ENCODE measurements at regions of chr2 and their contacts with region 1.

Region 1: DNA sequence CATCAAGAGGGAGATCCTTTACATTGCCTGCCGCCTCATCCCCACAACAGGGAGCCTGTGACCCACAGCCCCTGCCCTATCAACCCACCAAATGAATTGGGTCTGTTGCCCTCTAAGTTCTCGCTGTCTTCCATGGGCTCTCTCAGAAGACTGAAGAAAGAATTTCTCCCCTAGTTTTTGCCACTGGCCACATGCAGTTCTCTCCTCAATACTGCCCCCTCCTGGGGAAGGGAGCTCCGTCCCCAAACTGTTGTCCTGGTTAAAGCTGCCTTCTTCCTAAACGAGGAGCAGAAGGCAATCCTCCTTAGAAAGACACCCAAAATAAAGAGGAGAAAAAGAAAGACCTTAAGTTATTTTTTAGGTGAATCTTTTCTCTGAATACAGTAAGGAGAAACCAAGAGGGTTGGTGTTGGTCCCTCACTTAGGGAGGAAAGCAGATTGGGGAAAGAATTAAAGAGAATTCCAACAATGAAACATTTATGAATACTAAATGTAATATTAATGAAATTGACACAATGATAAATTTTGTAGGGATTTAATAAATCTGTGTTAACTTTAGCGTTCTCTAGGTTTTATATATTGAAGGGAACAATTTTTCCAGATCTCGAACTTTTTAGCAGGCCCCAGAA is 31.1 kb upstream of the SATB2 start:
- DNase-seq: peak; percentile 68
- H3K4me3 Mint-ChIP-seq: no peak overlapping the region
- H3K27ac Mint-ChIP-seq: no peak overlapping the region
- H3K4me1 Mint-ChIP-seq: no peaks in the 10 kb centered on the region
- H3K27me3 Mint-ChIP-seq: peaks cover 18% of the 10 kb centered on the region

Region 2: GRCh38 chr2:198374375-198375082 is 1114.4 kb before region 1 on chr2:
- CTCF ChIA-PET with region 1: no interaction called
- intact Hi-C with region 1: loop called (anchors 1 kb)
- DNase-seq: peak; percentile 68
- H3K4me3 Mint-ChIP-seq: no peak overlapping the region
- H3K27ac Mint-ChIP-seq: no peak overlapping the region
- H3K4me1 Mint-ChIP-seq: peaks cover 6% of the 10 kb centered on the region
- H3K27me3 Mint-ChIP-seq: peaks cover 9% of the 10 kb centered on the region

Region 3: GRCh38 chr2:198657512-198658121 is 831.3 kb before region 1 on chr2:
- CTCF ChIA-PET with region 1: no interaction called
- intact Hi-C with region 1: loop called (anchors 1 kb)
- DNase-seq: peak; percentile 12
- H3K4me3 Mint-ChIP-seq: no peak overlapping the region
- H3K27ac Mint-ChIP-seq: no peak overlapping the region
- H3K4me1 Mint-ChIP-seq: no peaks in the 10 kb centered on the region
- H3K27me3 Mint-ChIP-seq: no peaks in the 10 kb centered on the region

Region 4: DNA sequence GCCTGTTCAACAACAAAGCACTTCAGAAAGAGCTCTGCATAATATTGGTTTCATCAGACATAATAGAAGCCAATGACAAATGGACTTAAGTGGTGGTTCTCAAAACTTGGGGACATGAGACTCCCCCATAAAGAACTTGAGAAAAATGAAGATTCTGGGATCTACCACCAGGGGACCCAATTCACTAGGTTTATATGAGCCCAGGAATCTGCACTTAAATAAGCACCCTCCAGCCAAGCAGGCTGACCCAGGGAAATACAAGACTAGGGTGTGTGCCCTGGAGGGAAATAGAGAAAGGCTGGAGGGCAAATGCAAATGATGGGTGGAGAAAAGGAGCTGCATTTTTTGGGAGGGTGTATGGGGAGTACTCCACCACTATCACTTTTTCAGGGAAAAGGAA is 83.6 kb before region 1 on chr2:
- CTCF ChIA-PET with region 1: interaction called, 3 read pairs
- intact Hi-C with region 1: loop called (anchors 1 kb)
- DNase-seq: no peak
- H3K4me3 Mint-ChIP-seq: no peak overlapping the region
- H3K27ac Mint-ChIP-seq: no peak overlapping the region
- H3K4me1 Mint-ChIP-seq: no peaks in the 10 kb centered on the region
- H3K27me3 Mint-ChIP-seq: peaks cover 14% of the 10 kb centered on the region

Region 5: GRCh38 chr2:199477277-199477834 is 11.5 kb before region 1 on chr2:
- CTCF ChIA-PET with region 1: interaction called, 22 read pairs
- intact Hi-C with region 1: no loop called
- DNase-seq: no peak
- H3K4me3 Mint-ChIP-seq: no peak overlapping the region
- H3K27ac Mint-ChIP-seq: no peak overlapping the region
- H3K4me1 Mint-ChIP-seq: no peaks in the 10 kb centered on the region
- H3K27me3 Mint-ChIP-seq: peaks cover 35% of the 10 kb centered on the region